Activated CD4-positive, alpha-beta T cell treated with anti-CD3 and anti-CD28 coated beads for 36 hours (primary cell): ENCODE measurements at regions of chr17 and their contacts with region 1.

Region 1: GRCh38 chr17:66841328-66841727 is 6.4 kb downstream of the CACNG5 start:
- DNase-seq: no peak
- ATAC-seq: no peak
- H3K4me3 Mint-ChIP-seq: no peak overlapping the region
- H3K27ac Mint-ChIP-seq: no peak overlapping the region
- H3K4me1 Mint-ChIP-seq: no peaks in the 10 kb centered on the region
- H3K27me3 Mint-ChIP-seq: peaks cover 14% of the 10 kb centered on the region

Region 2: GRCh38 chr17:66807182-66807581 is 34.1 kb before region 1 on chr17:
- CTCF ChIA-PET with region 1: no interaction called
- POLR2A ChIA-PET with region 1: no interaction called
- intact Hi-C with region 1: no loop called
- DNase-seq: no peak
- ATAC-seq: no peak
- H3K4me3 Mint-ChIP-seq: no peak overlapping the region
- H3K27ac Mint-ChIP-seq: no peak overlapping the region
- H3K4me1 Mint-ChIP-seq: peaks cover 11% of the 10 kb centered on the region
- H3K27me3 Mint-ChIP-seq: no peaks in the 10 kb centered on the region

Region 3: GRCh38 chr17:66900126-66901010 is 59.0 kb after region 1 on chr17:
- CTCF ChIA-PET with region 1: no interaction called
- POLR2A ChIA-PET with region 1: no interaction called
- intact Hi-C with region 1: loop called in 1 of 2 experiments (anchors 5 kb)
- DNase-seq: no peak
- ATAC-seq: no peak
- H3K4me3 Mint-ChIP-seq: no peak overlapping the region
- H3K27ac Mint-ChIP-seq: no peak overlapping the region
- H3K4me1 Mint-ChIP-seq: no peaks in the 10 kb centered on the region
- H3K27me3 Mint-ChIP-seq: peaks cover 7% of the 10 kb centered on the region

Region 4: GRCh38 chr17:66988049-66988798 is 146.9 kb after region 1 on chr17:
- CTCF ChIA-PET with region 1: no interaction called
- POLR2A ChIA-PET with region 1: no interaction called
- intact Hi-C with region 1: no loop called
- DNase-seq: no peak
- ATAC-seq: no peak
- H3K4me3 Mint-ChIP-seq: no peak overlapping the region
- H3K27ac Mint-ChIP-seq: no peak overlapping the region
- H3K4me1 Mint-ChIP-seq: peaks cover 3% of the 10 kb centered on the region
- H3K27me3 Mint-ChIP-seq: peaks cover 15% of the 10 kb centered on the region